ENCODE measurements at regions of chr14 and their contacts with region 1.

Region 1: DNA sequence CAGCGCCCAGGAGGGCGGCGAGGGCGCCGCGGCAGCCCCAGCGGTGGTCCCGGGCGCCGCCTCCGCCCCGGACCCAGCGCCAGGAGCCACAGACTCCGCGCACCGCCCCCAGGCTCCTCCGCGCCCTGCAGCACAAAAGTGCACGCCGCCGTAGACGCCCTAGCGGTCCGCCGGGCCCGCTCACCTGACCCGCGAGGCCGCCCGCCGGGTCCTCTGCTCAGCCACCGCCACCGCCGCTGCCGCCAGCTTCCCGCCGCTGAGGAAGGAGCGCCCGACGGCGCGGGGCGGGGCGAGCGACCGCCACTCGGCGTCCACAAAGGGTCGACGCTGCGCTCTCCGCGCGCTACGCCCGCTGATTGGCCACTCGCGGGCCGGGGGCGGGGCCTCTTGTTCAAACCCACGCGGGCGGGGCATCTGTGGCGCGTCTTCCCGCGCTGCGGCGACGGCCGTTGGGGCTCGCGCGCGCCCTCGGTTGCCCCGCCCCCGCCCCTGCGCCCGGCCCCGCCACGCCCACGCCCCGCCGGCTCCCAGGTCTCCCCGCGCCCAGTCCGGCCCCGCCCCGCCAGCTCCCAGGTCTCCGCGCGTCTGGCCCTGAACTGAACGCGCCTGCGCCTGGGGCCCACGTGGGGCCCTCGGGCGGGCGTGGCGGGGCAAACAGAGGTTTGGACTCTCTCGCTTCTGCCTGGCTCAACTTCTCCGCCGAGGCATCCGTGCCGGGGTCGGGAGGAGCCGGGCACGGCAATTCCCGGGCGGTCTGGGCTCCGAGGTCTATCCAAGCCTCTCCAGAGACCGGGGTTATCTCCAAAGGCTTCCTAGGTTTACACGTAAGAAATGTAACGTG is at the start of gene CDCA4:
- DNase-seq: peak; percentile 97
- H3K4me3 Mint-ChIP-seq: peak within 1 kb of the TSS; percentile 94
- H3K27ac Mint-ChIP-seq: peak within 1 kb of the TSS; percentile 94
- H3K4me1 Mint-ChIP-seq: peaks cover 69% of the 10 kb centered on the region
- H3K27me3 Mint-ChIP-seq: no peaks in the 10 kb centered on the region
- total RNA-seq, gene CDCA4: 53.0 to 56.6 TPM

Region 2: DNA sequence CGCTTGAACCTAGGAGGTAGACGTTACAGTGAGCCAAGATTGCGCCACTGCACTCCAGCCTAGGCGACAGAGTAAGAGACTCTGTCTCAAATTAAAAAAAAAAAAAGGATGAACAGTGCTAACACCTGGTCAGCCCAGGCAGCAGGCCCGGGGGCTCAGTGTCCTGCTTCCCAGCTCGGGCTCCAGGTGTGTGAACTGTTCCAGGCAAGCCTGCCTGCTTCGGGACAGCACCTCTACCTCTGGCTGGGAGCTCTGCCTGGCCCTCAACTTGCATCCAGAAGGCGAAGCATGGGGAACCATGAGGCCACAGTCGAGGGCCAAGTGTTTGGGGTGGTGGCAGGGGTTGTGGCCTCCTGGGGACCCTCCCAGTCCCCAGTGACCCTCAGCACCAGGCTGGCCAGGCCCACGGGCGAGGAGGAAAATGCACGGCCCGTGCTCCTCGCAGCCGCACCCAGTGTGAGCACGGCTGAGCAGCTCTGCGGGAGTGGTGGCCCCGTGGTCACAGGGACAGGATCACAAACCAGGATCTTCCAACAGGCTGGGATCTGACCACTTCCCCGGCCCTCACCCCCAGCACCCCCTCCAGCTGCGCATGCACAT is 15.6 kb before region 1 on chr14:
- CTCF ChIA-PET with region 1: interaction called, 21 read pairs
- POLR2A ChIA-PET with region 1: no interaction called
- DNase-seq: no peak
- H3K4me3 Mint-ChIP-seq: no peak overlapping the region
- H3K27ac Mint-ChIP-seq: peak overlapping the region; percentile 13
- H3K4me1 Mint-ChIP-seq: peaks cover 2% of the 10 kb centered on the region
- H3K27me3 Mint-ChIP-seq: no peaks in the 10 kb centered on the region